Activated B cell treated with CpG ODN at 0.5 μM for 24 hours (primary cell): ENCODE measurements at regions of chr7 and their contacts with region 1.

Region 1: GRCh38 chr7:30348083-30348560 is 63.7 kb downstream of the ZNRF2 start:
- DNase-seq: no peak
- ATAC-seq: peak; percentile 83
- H3K4me3 Mint-ChIP-seq: peak overlapping the region; percentile 32
- H3K27ac Mint-ChIP-seq: peak overlapping the region; percentile 86
- H3K4me1 Mint-ChIP-seq: peaks cover 65% of the 10 kb centered on the region
- H3K27me3 Mint-ChIP-seq: no peaks in the 10 kb centered on the region
- CTCF ChIP-seq: no peak

Region 2: GRCh38 chr7:29538389-29538788 is 809.7 kb before region 1 on chr7:
- CTCF ChIA-PET with region 1: no interaction called
- POLR2A ChIA-PET with region 1: no interaction called
- intact Hi-C with region 1: no loop called
- DNase-seq: no peak
- ATAC-seq: no peak
- H3K4me3 Mint-ChIP-seq: no peak overlapping the region
- H3K27ac Mint-ChIP-seq: no peak overlapping the region
- H3K4me1 Mint-ChIP-seq: no peaks in the 10 kb centered on the region
- H3K27me3 Mint-ChIP-seq: peaks cover 20% of the 10 kb centered on the region
- CTCF ChIP-seq: no peak

Region 3: DNA sequence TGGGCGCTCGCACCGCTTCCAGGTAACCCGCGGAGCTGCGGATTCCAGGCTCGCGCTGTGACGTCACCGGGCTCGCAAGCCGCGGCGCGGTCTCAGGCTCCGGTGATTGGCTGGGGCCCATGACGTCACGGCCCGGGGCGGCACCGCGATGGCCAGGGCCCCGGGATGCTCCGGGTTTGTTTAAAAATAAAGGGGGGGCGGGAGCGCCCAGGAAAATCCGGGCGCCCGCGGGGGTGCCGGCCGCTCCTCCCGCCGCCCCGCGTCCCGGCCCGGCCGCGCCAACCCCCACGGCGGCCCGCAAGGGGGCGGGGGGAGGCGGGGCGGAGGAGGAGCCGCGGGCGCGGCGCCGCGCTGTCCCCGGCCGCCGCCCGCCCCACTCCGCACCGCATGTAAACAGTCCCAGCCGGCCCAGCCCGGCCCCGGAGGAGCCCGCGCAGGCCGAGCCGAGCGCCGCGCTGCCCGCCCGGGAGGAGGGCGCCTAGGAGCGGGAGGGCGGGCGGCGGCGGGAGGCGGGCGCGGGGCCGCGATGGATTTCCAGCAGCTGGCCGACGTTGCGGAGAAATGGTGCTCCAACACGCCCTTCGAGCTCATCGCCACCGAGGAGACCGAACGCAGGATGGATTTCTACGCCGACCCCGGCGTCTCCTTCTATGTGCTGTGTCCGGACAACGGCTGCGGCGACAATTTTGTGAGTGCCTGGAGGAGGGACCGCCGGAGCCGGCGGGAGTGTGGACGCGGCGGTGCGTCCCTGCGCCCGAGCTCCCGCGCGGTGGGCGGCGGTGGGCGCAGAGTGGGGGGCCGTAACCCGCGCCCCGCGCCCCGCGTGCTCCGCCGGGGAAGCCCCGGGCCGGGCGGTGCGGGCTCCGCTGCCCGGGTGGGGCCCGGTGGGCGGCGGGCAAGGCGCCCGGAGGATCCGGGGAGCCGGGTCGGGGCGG is 213.2 kb before region 1 on chr7 and contains the start of gene MTURN:
- CTCF ChIA-PET with region 1: no interaction called
- POLR2A ChIA-PET with region 1: interaction called, 14 read pairs
- intact Hi-C with region 1: no loop called
- DNase-seq: peak; percentile 85
- ATAC-seq: peak; percentile 82
- H3K4me3 Mint-ChIP-seq: peak within 1 kb of the TSS; percentile 91
- H3K27ac Mint-ChIP-seq: peak within 1 kb of the TSS; percentile 77
- H3K4me1 Mint-ChIP-seq: peaks cover 12% of the 10 kb centered on the region
- H3K27me3 Mint-ChIP-seq: peaks cover 11% of the 10 kb centered on the region
- CTCF ChIP-seq: no peak
- total RNA-seq, gene MTURN: 2.8 and 4.6 TPM in 2 replicates

Region 4: DNA sequence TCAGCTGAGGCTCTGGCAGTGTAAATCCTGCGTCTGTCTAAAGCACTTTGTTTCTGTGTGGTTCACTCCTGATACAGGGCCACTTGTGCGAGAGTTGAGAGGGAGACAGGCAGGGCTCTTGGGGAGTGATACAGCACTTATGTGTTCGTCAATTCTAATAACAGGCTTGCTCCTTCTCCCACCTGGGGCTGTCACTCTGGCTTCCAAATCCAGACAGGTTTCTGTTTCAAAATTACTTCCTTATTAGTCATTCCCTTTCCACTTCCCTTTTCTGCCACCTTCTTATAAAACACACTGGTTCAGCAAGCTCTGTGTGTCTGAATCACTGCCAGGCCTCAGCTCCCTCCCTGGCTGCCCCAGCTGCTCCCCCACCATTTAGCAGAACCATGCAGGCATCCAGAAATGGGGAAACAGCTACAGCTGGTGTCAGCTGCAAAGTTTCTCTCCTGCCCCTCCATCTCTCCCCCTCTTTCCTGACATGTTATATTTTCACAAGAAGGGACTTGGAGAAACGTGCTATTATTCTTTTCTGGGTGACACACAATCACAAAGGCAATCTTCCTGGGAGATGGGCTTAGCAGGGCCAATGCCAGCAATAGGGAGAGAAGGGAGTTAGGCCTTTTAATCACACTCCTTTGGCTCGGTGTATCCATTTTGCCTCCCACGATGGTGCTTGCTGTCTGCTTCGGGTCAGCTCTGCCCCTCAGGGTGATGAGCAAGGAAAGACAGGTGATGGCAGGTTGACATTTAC is 122.1 kb before region 1 on chr7:
- CTCF ChIA-PET with region 1: no interaction called
- POLR2A ChIA-PET with region 1: no interaction called
- intact Hi-C with region 1: loop called (anchors 5 kb)
- DNase-seq: peak; percentile 41
- ATAC-seq: peak; percentile 98
- H3K4me3 Mint-ChIP-seq: peak overlapping the region; percentile 39
- H3K27ac Mint-ChIP-seq: peak overlapping the region; percentile 92
- H3K4me1 Mint-ChIP-seq: peaks cover 28% of the 10 kb centered on the region
- H3K27me3 Mint-ChIP-seq: no peaks in the 10 kb centered on the region
- CTCF ChIP-seq: no peak

Region 5: DNA sequence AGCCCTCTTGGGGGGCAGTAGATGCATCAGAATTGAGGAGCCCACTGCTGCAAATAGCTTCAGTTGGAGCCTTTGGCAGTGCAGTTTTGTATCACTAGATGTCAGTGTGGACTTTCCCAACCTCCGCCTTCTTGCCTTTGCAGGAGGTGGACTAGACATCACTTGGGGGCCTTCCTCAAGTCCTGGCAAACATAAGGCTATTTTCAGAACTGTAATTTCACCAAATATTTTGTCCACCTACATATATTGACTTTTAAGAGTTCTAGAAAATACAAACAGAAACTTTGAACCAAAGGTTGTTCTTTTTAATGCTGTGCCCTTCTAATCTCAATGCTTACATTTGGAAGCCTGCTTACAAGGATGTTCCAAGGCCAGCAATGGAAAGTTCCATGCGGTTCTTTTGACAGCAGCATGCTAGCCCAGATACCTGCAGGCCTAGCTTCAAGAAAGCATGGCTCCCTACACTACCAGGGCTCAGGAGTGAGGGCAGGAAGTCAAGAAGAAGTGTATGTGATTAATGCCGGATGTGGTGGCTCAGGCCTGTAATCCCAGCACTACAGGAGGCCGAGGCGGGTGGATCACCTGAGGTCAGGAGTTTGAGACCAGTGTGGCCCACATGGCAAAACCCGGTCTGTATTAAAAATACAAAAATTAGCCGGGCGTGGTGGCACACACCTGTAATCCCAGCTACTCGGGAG is 71.8 kb before region 1 on chr7:
- CTCF ChIA-PET with region 1: interaction called, 66 read pairs
- POLR2A ChIA-PET with region 1: no interaction called
- intact Hi-C with region 1: loop called (anchors 1 kb)
- DNase-seq: no peak
- ATAC-seq: peak; percentile 78
- H3K4me3 Mint-ChIP-seq: no peak overlapping the region
- H3K27ac Mint-ChIP-seq: no peak overlapping the region
- H3K4me1 Mint-ChIP-seq: peaks cover 16% of the 10 kb centered on the region
- H3K27me3 Mint-ChIP-seq: no peaks in the 10 kb centered on the region
- CTCF ChIP-seq: no peak

Region 6: GRCh38 chr7:30322271-30323005 is 25.7 kb before region 1 on chr7:
- CTCF ChIA-PET with region 1: interaction called, 11 read pairs
- POLR2A ChIA-PET with region 1: interaction called, 26 read pairs
- intact Hi-C with region 1: loop called (anchors 1 kb)
- DNase-seq: no peak
- ATAC-seq: peak; percentile 78
- H3K4me3 Mint-ChIP-seq: peak overlapping the region; percentile 78
- H3K27ac Mint-ChIP-seq: peak overlapping the region; percentile 97
- H3K4me1 Mint-ChIP-seq: peaks cover 83% of the 10 kb centered on the region
- H3K27me3 Mint-ChIP-seq: no peaks in the 10 kb centered on the region
- CTCF ChIP-seq: no peak

Region 7: DNA sequence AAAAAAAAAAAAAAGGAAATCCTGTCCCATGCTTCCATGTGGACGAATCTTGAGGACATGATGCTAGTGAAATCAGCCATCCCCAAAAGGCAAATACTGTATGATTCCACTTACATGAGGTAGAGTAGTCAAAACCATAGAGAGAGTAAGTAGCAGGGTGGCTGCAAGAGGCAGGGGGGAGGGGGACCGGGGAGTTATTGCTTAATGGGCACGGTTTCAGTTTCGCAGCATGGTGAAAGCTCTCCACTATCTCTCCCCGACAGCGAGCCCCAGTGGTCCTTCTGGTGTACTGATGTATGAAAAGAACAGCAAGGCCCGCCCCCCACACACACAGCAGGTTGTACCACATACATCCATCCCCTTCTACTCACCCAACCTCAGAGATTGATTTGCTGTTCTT is 97.6 kb after region 1 on chr7:
- CTCF ChIA-PET with region 1: no interaction called
- POLR2A ChIA-PET with region 1: no interaction called
- intact Hi-C with region 1: loop called (anchors 5 kb)
- DNase-seq: peak; percentile 66
- ATAC-seq: peak; percentile 100
- H3K4me3 Mint-ChIP-seq: no peak overlapping the region
- H3K27ac Mint-ChIP-seq: peak overlapping the region; percentile 64
- H3K4me1 Mint-ChIP-seq: peaks cover 6% of the 10 kb centered on the region
- H3K27me3 Mint-ChIP-seq: no peaks in the 10 kb centered on the region
- CTCF ChIP-seq: no peak

Region 8: GRCh38 chr7:30564243-30564892 is 216.2 kb after region 1 on chr7:
- CTCF ChIA-PET with region 1: interaction called, 9 read pairs
- POLR2A ChIA-PET with region 1: no interaction called
- intact Hi-C with region 1: loop called (anchors 5 kb)
- DNase-seq: peak; percentile 65
- ATAC-seq: peak; percentile 97
- H3K4me3 Mint-ChIP-seq: no peak overlapping the region
- H3K27ac Mint-ChIP-seq: no peak overlapping the region
- H3K4me1 Mint-ChIP-seq: no peaks in the 10 kb centered on the region
- H3K27me3 Mint-ChIP-seq: no peaks in the 10 kb centered on the region
- CTCF ChIP-seq: peak; percentile 38